ENCODE measurements at regions of chr15 and their contacts with region 1.

Region 1: GRCh38 chr15:51162865-51163762 is 68.4 kb upstream of the TNFAIP8L3 start:
- DNase-seq: peak; percentile 59 to 77
- ATAC-seq: peak; percentile 91 to 98 (median 94)
- H3K4me3 ChIP-seq: peak overlapping the region; percentile 48
- H3K27ac ChIP-seq: peak overlapping the region; percentile 46
- H3K4me1 ChIP-seq: peaks cover 6% of the 10 kb centered on the region
- H3K27me3 ChIP-seq: no peaks in the 10 kb centered on the region
- CTCF ChIP-seq: peak; percentile 99

Region 2: DNA sequence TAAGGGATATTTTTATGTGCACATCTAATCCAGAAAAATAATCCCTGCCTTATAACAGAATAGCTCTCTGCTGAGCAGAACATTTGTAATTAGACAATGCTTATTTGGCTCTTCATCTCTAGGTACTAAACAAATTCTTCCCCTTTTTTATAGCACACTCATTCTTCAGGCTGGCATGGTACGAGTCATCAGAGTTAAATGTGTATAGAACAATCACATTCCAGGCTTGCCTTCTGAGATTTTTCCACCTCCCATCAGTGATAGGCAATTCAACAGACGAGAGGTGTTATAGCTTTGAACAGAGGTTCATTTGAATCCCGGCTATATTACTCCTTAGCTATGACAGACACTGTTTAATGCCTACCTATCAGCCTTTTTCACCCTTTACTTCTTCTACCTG is 376.2 kb before region 1 on chr15:
- intact Hi-C with region 1: no loop called
- DNase-seq: no peak
- ATAC-seq: peak in 3 of 4 donors; percentile 10 to 22 (median 21)
- H3K4me3 ChIP-seq: no peak overlapping the region
- H3K27ac ChIP-seq: peak overlapping the region; percentile 67
- H3K4me1 ChIP-seq: peaks cover 21% of the 10 kb centered on the region
- H3K27me3 ChIP-seq: no peaks in the 10 kb centered on the region
- CTCF ChIP-seq: no peak

Region 3: DNA sequence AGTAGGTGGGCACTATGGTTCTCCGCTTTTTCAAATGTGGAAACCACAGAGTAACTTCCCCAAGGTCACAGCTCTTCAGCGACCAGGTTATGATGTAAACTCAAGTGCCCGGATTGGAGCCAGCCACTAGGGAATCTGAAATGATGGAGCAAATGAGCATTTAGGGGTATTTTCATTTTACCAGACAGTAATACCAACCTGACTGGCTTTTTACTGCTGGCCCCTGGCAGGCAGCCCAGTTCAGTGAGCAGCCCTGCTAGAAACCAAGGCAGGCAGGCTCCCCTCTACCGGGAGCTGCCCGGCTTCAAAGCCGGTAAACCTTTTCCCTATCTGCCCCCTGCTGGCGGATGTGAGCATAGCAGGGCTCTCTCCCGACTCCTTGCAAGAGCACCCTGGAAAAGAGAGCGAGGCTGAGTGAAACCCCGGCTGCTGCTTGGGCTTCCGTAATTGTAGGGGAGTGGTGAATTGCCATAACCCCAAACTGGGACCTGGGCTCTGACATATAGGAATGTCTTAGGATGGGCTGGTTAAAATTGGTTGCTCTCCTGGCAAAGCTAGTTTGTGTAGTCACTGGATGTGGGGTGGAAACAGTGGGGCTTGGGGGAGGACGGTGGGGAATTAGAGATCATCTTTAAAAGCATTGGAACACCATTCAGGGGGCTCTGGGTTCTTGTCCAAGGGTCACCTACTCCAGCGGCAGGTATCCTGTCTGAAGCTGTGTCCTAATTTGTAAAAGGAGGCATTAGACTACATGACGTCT is 29.6 kb after region 1 on chr15:
- intact Hi-C with region 1: loop called (anchors 1 to 2 kb)
- DNase-seq: peak; percentile 88 to 93
- ATAC-seq: peak; percentile 82 to 89 (median 84)
- H3K4me3 ChIP-seq: no peak overlapping the region
- H3K27ac ChIP-seq: no peak overlapping the region
- H3K4me1 ChIP-seq: peaks cover 18% of the 10 kb centered on the region
- H3K27me3 ChIP-seq: peaks cover 0 to 4% (median 0%) of the 10 kb centered on the region in 3 donors
- CTCF ChIP-seq: peak; percentile 91

Region 4: DNA sequence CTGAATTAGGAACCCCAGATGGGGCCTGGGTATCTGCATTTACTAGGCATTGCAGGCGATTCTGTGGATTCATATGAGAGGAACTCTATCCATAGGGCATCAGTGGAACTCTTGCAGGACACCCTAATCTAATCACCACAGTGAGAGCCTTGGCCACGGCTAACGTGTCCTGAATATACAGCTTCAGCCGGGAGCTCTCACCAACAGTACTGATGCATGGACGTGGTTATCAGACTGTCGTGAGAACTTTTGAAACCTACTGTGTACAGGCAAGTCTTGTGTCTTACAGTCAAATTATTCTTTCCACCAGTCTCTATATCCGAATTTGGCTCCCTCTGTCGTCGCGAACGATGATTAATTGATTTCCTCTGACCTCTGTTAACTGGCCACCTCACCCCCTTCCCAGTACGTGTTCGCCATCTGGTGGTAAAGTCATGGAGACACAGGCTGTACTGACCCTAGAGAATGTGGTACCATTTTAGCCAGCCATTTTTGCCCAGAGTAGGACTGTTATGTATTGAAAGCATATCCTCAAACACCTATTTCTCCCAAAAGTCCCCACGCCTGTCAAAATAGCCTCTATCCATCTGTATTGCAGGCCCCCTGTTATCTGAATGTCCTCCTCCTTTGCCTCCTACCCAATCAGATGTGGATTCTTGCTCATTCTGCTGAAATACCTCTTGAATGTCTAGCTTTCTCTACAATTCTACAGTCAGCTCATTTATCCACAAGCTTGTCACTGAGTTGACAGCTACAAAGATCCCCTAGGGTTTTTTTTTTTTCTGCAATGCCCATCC is 218.1 kb after region 1 on chr15:
- intact Hi-C with region 1: loop called (anchors 1 to 5 kb)
- DNase-seq: peak in 1 of 2 donors; percentile 58
- ATAC-seq: peak; percentile 73 to 96 (median 91)
- H3K4me3 ChIP-seq: no peak overlapping the region
- H3K27ac ChIP-seq: no peak overlapping the region
- H3K4me1 ChIP-seq: no peaks in the 10 kb centered on the region
- H3K27me3 ChIP-seq: no peaks in the 10 kb centered on the region
- CTCF ChIP-seq: peak; percentile 78

Region 5: GRCh38 chr15:51401872-51402517 is 238.9 kb after region 1 on chr15:
- intact Hi-C with region 1: loop called in 1 of 2 experiments (anchors 5 kb)
- DNase-seq: peak in 1 of 2 donors; percentile 18
- ATAC-seq: no peak
- H3K4me3 ChIP-seq: no peak overlapping the region
- H3K27ac ChIP-seq: no peak overlapping the region
- H3K4me1 ChIP-seq: no peaks in the 10 kb centered on the region
- H3K27me3 ChIP-seq: peaks cover 0 to 2% (median 0%) of the 10 kb centered on the region in 3 donors
- CTCF ChIP-seq: peak; percentile 25

Measured in psoas muscle (tissue), 8 donors.